ENCODE measurements at regions of chr2 and their contacts with region 1.

Region 1: DNA sequence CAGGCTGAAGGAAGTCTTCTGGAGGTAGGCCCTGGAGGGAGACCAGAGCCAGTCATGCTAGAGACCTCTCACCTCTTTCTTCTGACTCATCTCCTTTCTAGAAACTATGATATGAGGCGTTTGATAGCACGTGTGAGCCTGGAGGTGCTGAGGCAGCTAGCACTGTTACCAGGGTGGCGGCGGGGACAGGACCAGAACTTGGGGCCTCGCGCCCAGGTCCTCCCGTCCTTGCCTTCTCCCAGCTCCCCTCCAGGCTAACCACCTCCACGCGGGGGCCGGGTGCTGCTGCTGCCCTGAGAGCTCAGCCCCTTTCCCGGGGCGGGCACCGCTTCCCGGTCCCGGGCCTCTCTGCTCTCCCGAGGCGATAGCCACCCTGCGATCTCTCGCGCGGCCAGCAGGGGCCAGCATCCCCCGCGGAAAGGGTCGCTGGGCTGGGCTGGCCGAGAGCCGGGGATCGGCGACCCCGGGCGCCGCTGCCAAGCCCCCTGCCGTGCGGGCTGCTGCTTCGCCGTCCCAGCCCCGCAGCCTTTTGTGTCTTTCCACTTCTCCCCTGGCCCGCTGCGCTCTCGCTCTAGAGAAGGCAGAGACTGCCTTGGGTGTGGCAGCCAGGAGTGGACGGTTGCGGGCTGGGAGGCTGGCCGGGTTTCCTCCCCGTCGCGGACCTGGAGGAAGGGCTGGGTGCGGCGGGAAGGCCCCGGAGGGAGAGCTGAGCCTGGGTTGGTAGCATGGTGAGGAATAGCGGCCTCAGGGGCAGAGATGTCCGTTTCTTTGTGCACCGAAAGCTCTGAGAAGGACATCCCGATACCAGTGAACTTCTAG is 49.1 kb downstream of the TMEM17 start:
- DNase-seq: peak; percentile 74
- H3K4me3 ChIP-seq: peak overlapping the region; percentile 41 to 72 (median 52)
- H3K27ac ChIP-seq: peak overlapping the region; percentile 70
- H3K4me1 ChIP-seq: peaks cover 32% of the 10 kb centered on the region
- H3K27me3 ChIP-seq: no peaks in the 10 kb centered on the region
- CTCF ChIP-seq: peak; percentile 72 to 92

Region 2: GRCh38 chr2:62577994-62578781 is 121.3 kb after region 1 on chr2:
- CTCF ChIA-PET with region 1: interaction called, 6 read pairs
- dilution Hi-C with region 1: no loop called
- in situ Hi-C with region 1: no loop called
- intact Hi-C with region 1: loop called (anchors 1 kb)
- DNase-seq: peak; percentile 98
- H3K4me3 ChIP-seq: peak overlapping the region in 1 of 3 experiments; percentile 8
- H3K27ac ChIP-seq: peak overlapping the region; percentile 100
- H3K4me1 ChIP-seq: peaks cover 33% of the 10 kb centered on the region
- H3K27me3 ChIP-seq: no peaks in the 10 kb centered on the region
- CTCF ChIP-seq: no peak

Region 3: DNA sequence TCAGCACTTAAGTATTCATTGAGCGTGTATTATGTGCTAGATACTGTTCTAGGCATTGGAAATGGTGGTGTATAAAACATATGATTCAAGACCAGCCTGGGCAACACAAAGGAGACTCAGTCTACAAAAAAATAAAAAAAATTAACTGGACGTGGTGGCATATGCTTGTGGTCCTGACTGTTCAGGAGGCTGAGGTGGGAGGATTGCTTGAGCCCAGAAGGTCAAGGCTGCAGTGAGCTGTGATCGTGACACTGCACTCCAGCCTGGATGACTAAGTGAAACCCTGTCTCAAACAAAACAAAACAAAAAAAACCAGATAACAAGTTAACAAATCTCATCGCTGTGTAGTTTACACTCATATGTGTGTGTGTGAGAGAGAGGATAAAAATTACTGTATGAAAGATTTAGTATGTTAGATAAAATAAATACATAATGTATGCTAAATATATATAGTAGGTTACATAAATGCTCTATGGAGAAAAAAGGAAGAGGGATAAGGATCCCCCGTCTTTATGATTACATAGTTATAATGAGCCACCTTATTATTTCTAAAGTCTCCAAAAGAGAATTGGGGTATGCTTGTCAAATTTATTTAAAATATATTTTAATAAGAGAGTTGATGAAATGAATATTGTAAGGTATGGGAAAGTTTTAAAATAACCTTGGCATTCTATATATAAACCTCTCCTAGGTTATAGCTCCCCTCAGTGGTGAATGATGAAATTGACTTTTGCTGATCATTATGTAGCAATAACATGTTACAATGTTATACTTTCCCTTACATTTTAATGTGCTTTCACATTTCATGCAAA is 317.8 kb after region 1 on chr2:
- CTCF ChIA-PET with region 1: interaction called, 8 read pairs
- dilution Hi-C with region 1: no loop called
- in situ Hi-C with region 1: loop called (anchors 5 kb)
- intact Hi-C with region 1: loop called (anchors 1 kb)
- DNase-seq: peak; percentile 46
- H3K4me3 ChIP-seq: no peak overlapping the region
- H3K27ac ChIP-seq: peak overlapping the region; percentile 40
- H3K4me1 ChIP-seq: no peaks in the 10 kb centered on the region
- H3K27me3 ChIP-seq: no peaks in the 10 kb centered on the region
- CTCF ChIP-seq: peak; percentile 71

Region 4: GRCh38 chr2:63189026-63189425 is 732.1 kb after region 1 on chr2:
- CTCF ChIA-PET with region 1: no interaction called
- dilution Hi-C with region 1: no loop called
- in situ Hi-C with region 1: no loop called
- intact Hi-C with region 1: loop called (anchors 5 kb)
- DNase-seq: peak; percentile 41
- H3K4me3 ChIP-seq: no peak overlapping the region
- H3K27ac ChIP-seq: no peak overlapping the region
- H3K4me1 ChIP-seq: no peaks in the 10 kb centered on the region
- H3K27me3 ChIP-seq: no peaks in the 10 kb centered on the region
- CTCF ChIP-seq: peak; percentile 95 to 97